AG04450 (cell line): ENCODE measurements at regions of chr7 and their contacts with region 1.

Region 1: GRCh38 chr7:25851332-25852210 is 300.4 kb upstream of the NFE2L3 start:
- DNase-seq: peak; percentile 57
- H3K4me3 ChIP-seq: no peak overlapping the region
- H3K27ac ChIP-seq: no peak overlapping the region
- H3K27me3 ChIP-seq: no peaks in the 10 kb centered on the region
- CTCF ChIP-seq: peak; percentile 92

Region 2: GRCh38 chr7:25259587-25260243 is 591.9 kb before region 1 on chr7:
- CTCF ChIA-PET with region 1: interaction called, 128 read pairs
- POLR2A ChIA-PET with region 1: interaction called, 3 read pairs
- DNase-seq: peak; percentile 53
- H3K4me3 ChIP-seq: no peak overlapping the region
- H3K27ac ChIP-seq: no peak overlapping the region
- H3K27me3 ChIP-seq: peaks cover 8% of the 10 kb centered on the region
- CTCF ChIP-seq: peak; percentile 91

Region 3: DNA sequence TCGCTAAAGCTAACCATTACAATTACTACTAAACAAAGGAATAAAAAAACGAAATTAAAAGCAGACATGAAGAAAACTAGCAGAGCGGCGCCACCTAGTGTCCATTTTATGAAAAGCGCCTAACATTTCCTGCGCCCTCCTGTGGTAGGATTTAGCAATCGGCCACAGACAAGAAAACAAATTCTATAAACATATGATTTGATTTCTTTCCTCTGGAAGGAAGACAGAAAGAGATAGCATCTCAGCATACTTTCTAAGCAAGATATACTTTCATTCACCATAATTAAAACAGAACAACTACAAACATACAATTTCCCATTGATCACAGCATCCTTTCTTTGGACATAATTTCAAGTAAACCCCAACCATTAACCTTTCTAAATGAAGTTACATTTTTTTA is 285.6 kb before region 1 on chr7:
- CTCF ChIA-PET with region 1: interaction called, 113 read pairs
- POLR2A ChIA-PET with region 1: no interaction called
- DNase-seq: peak; percentile 61
- H3K4me3 ChIP-seq: no peak overlapping the region
- H3K27ac ChIP-seq: no peak overlapping the region
- H3K27me3 ChIP-seq: peaks cover 9% of the 10 kb centered on the region
- CTCF ChIP-seq: peak; percentile 100

Region 4: GRCh38 chr7:25720427-25720826 is 131.1 kb before region 1 on chr7:
- CTCF ChIA-PET with region 1: interaction called, 15 read pairs
- POLR2A ChIA-PET with region 1: no interaction called
- DNase-seq: no peak
- H3K4me3 ChIP-seq: no peak overlapping the region
- H3K27ac ChIP-seq: no peak overlapping the region
- H3K27me3 ChIP-seq: no peaks in the 10 kb centered on the region
- CTCF ChIP-seq: peak; percentile 51

Region 5: DNA sequence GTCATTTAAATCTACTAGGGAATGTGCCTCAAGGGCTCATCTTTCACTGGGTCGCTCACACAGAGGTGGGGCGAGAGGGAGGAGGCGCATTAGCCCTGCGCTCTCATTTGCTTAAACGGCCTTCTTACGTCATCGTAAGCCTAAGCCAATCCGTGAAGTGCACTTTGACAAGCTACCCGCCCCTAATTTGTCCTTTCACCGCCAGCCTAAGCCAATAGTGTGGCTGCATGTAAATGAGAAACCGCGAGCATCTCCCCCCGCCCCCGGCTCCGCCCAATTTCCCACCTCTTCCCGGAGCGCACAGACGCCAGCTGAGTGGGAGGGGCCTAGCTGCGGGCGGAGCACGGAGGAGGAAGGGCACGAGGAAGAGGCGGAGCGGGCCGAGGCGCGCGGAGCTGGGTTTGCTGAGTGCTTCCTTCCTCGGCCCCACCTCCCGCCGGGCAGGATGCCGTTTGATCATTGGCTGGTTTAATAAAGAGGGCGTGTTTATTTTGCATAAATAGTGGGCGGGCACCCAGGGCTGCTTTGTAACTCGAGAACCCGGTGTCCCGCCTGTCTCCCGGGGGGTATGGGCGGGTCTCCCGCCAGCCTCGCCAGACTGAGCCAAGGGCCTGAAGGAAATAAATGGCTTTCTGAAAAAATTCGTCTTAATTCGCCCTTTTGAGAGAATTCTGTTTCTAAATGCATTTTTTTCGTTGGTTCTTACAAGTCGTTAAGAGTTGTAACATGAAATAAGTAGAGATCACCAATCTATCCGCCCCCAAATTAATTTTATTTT is 10.9 kb after region 1 on chr7:
- CTCF ChIA-PET with region 1: interaction called, 9 read pairs
- POLR2A ChIA-PET with region 1: interaction called, 11 read pairs
- DNase-seq: peak; percentile 100
- H3K4me3 ChIP-seq: no peak overlapping the region; the same call in 1 of the 2 replicates
- H3K27ac ChIP-seq: no peak overlapping the region
- H3K27me3 ChIP-seq: peaks cover 38% of the 10 kb centered on the region
- CTCF ChIP-seq: no peak